ENCODE measurements at regions of chr17 and their contacts with region 1.

Region 1: GRCh38 chr17:70144260-70144846 is 25.0 kb upstream of the KCNJ2 start:
- DNase-seq: no peak
- ATAC-seq: no peak

Region 2: DNA sequence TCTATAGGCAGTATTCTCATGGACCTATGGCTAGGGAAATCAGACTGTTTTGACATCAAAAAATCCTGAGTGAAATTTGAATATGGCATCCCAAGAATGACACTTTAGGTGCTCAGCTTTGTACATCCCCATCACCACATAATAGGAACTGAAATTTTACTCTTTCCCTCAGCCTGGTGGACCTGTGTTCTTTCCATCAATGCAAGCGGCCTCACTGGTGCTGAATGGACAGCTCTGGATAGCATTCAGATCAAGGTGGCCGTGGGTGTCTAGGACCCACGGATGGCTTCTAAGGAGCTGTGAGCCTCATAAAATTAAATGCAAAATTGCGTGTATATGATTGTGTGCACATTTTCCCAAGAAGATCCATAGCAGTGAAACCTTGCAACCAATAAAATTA is 577.2 kb before region 1 on chr17:
- intact Hi-C with region 1: loop called (anchors 10 kb)
- DNase-seq: no peak
- ATAC-seq: no peak

Region 3: GRCh38 chr17:69607162-69607834 is 537.1 kb before region 1 on chr17:
- intact Hi-C with region 1: loop called (anchors 10 kb)
- DNase-seq: peak; percentile 86
- ATAC-seq: peak; percentile 88